Gastrocnemius medialis (tissue), 4 donors: ENCODE measurements at regions of chr1 and their contacts with region 1.

Region 1: GRCh38 chr1:151059078-151059907 is at the start of gene CDC42SE1:
- DNase-seq: peak; percentile 64 to 75
- ATAC-seq: peak; percentile 89
- H3K4me3 ChIP-seq: peak within 1 kb of the TSS; percentile 90 to 98 (median 94)
- H3K27ac ChIP-seq: peak within 1 kb of the TSS; percentile 90 to 98 (median 94)
- H3K4me1 ChIP-seq: peaks cover 28 to 35% of the 10 kb centered on the region in 2 donors
- H3K27me3 ChIP-seq: no peaks in the 10 kb centered on the region
- CTCF ChIP-seq: peak; percentile 77 to 94 (median 91)
- POLR2A ChIP-seq: peak; percentile 88 to 94
- total RNA-seq, gene CDC42SE1: 13.2 to 31.7 (median 22.8) TPM

Region 2: DNA sequence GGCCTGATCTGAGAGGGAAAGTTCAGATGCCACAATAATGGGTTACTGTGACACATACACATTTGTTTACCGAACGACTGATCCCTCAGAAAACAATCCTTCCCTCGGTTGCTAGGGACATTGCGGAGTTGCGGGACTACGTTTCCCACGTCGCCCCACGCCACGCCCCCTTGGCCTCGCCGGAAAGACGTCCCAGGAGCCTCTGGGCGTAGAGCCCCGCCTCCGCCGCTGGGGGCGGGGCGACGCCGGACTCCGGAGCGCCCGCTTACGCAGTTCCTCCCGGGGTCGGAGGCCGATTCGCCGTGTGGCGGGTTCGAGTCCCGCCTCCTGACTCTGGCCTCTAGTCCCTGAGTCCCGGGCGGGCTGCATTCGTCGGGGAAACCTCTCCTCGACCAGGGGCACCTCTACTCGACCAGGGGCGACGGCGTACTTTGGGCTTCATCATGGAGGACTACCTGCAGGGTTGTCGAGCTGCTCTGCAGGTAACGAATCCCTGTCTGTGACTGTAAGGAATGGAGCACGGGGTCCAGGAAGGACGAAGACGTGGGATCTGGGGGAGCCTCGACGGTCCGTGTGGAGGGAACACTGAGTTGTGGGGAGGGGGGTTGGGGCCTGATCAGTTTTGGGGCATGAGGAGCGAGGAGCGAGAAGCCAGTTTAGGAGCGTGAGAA is 51.0 kb before region 1 on chr1 and contains the start of gene PRUNE1:
- in situ Hi-C with region 1: no loop called
- intact Hi-C with region 1: loop called (anchors 5 kb)
- DNase-seq: peak; percentile 93 to 96
- ATAC-seq: peak; percentile 79 to 80
- H3K4me3 ChIP-seq: peak within 1 kb of the TSS; percentile 60 to 91 (median 86)
- H3K27ac ChIP-seq: peak within 1 kb of the TSS; percentile 89 to 95 (median 94)
- H3K4me1 ChIP-seq: peaks cover 54 to 62% of the 10 kb centered on the region in 2 donors
- H3K27me3 ChIP-seq: no peaks in the 10 kb centered on the region
- CTCF ChIP-seq: peak in 4 of 5 experiments; percentile 24 to 33 (median 26)
- POLR2A ChIP-seq: peak; percentile 65 to 72
- total RNA-seq, gene PRUNE1: 24.0 to 35.6 (median 29.1) TPM